HepG2 (cell line): ENCODE measurements at regions of chr9 and their contacts with region 1.

Region 1: GRCh38 chr9:131046581-131047202 is 37.7 kb downstream of the LAMC3 start:
- DNase-seq: peak; percentile 53
- ATAC-seq: peak; percentile 90
- H3K4me3 ChIP-seq: peak overlapping the region in 1 of 3 experiments; percentile 40; a peak in 2 of 6 replicates
- H3K27ac ChIP-seq: no peak overlapping the region
- H3K4me1 ChIP-seq: no peaks in the 10 kb centered on the region
- H3K27me3 ChIP-seq: peaks cover 3 to 47% of the 10 kb centered on the region in 2 experiments; a peak in 3 of 5 replicates
- CTCF ChIP-seq: peak; percentile 96
- EP300 ChIP-seq: no peak
- POLR2A ChIP-seq: no peak
- RAD21 ChIP-seq: peak; percentile 92

Region 2: DNA sequence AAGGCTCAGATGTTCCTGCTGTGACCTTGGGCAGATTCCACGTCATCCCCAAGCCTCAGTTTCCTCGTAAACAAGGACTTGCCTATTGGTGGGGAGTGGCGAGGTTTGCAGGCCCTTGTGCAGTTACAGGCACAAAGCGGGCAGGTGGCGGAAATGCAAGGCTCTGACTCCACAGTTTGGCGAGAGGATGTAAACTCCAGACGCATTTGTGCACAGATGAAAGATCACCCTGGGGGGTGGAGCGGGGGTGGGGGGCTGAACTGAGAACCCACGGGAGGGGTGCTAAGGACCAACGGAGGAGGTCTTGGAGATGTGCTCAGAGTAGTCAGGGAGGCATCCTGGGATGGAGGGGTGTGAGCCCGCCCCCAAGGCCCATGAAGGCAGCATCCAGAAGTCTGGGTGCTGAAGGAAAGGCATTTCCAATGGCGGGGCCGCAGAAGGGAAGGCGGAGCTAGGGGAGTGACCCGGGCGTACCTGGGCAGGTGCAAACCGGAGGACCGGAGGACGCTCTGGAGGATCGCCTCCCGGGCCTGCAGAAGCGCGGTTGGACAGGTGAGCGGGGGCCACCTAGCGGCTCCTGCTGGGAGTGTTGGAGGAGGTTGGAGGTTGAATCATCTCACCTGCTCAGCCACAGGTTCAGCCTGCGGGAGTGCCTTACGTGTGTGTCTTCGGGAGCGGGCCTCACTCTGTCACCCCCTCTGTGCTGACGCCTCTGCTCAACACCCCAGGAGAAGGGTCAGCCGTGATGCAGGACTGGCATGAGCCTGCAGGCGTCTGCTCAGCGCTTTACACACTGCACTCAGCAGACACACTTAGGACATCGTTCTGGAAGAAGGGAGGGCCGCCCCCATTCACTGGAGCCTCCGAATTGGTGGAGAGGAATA is 105.8 kb before region 1 on chr9:
- CTCF ChIA-PET with region 1: no interaction called
- POLR2A ChIA-PET with region 1: no interaction called
- in situ Hi-C with region 1: no loop called
- intact Hi-C with region 1: no loop called
- DNase-seq: peak; percentile 47
- ATAC-seq: peak; percentile 75
- H3K4me3 ChIP-seq: no peak overlapping the region
- H3K27ac ChIP-seq: no peak overlapping the region
- H3K4me1 ChIP-seq: peaks cover 24% of the 10 kb centered on the region
- H3K27me3 ChIP-seq: peaks cover 11 to 87% of the 10 kb centered on the region in 2 experiments
- CTCF ChIP-seq: peak; percentile 94
- EP300 ChIP-seq: no peak
- POLR2A ChIP-seq: no peak
- RAD21 ChIP-seq: peak; percentile 87

Region 3: GRCh38 chr9:131008909-131009618 is 37.6 kb before region 1 on chr9 and contains the start of gene LAMC3:
- CTCF ChIA-PET with region 1: no interaction called
- POLR2A ChIA-PET with region 1: no interaction called
- in situ Hi-C with region 1: loop called (anchors 5 kb)
- intact Hi-C with region 1: loop called (anchors 5 kb)
- DNase-seq: no peak
- ATAC-seq: peak; percentile 29
- H3K4me3 ChIP-seq: peak within 1 kb of the TSS in 1 of 3 experiments; percentile 23; a peak in 1 of 6 replicates
- H3K27ac ChIP-seq: no peak within 1 kb of the TSS
- H3K4me1 ChIP-seq: peaks cover 22% of the 10 kb centered on the region
- H3K27me3 ChIP-seq: peaks cover 13 to 62% of the 10 kb centered on the region in 2 experiments
- CTCF ChIP-seq: peak; percentile 41
- EP300 ChIP-seq: no peak
- POLR2A ChIP-seq: no peak
- RAD21 ChIP-seq: no peak
- total RNA-seq, gene LAMC3: 0.07 TPM in 1 of 2 replicates, not detected in the other

Region 4: DNA sequence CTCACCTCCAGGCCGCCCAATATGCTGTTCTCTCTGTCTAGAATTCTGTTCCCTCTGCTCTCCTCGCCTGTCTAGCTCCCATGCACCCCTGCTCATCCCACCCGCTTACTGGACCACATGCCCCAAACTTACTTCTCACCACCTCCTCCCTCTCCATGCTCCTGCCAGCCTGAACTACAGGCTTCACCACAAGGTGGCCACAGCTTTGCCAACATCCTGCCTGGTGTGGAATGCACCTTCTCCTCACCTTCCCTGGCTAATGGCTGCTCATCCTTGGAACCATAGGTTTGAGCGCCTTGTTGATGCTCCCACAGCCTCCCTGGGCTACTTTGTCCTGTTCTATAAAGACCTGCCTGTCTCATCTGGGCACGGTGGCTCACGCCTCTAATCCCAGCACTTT is 28.1 kb before region 1 on chr9:
- CTCF ChIA-PET with region 1: interaction called, 8 read pairs
- POLR2A ChIA-PET with region 1: no interaction called
- in situ Hi-C with region 1: loop called (anchors 5 kb)
- intact Hi-C with region 1: loop called (anchors 2 kb)
- DNase-seq: peak; percentile 20
- ATAC-seq: peak; percentile 85
- H3K4me3 ChIP-seq: no peak overlapping the region
- H3K27ac ChIP-seq: no peak overlapping the region
- H3K4me1 ChIP-seq: no peaks in the 10 kb centered on the region
- H3K27me3 ChIP-seq: peaks cover 7 to 69% of the 10 kb centered on the region in 2 experiments
- CTCF ChIP-seq: peak; percentile 62
- EP300 ChIP-seq: no peak
- POLR2A ChIP-seq: no peak
- RAD21 ChIP-seq: no peak

Region 5: DNA sequence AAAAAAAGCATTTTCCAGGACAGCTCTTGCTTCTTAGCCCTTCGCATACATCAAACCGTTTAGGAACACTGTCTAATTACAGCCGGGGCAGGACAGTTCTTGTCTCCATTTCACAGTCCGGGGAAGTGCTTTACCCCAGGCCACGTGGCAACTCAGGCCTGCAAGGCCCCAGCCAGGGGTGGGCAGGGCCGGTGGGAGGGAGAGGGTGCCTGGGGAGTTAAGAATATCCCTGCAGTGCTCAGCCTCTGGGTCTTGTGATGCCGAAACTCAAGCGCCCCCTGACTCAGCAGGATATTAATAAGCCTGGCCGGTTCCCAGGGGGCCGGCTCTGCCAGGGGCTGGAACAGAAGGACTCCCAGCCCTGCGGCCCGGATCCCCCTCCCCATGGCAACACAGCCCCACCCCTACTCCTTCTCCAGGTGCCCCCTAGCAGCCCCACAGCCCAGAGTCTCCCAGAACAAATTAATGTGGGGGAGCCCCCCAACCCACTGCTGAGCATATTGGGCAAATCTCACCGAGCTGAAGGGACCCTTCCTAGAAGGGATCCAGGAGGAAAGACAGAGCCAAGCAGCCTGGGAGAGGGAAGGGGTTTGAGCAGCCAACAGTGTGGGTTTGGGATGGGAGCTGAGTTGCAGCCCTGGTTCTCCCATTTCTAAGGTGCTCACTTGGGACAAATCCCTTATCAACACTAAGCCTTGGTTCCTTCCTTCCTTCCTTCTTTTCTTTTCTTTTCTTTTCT is 288.1 kb after region 1 on chr9:
- CTCF ChIA-PET with region 1: no interaction called
- POLR2A ChIA-PET with region 1: no interaction called
- in situ Hi-C with region 1: loop called (anchors 10 kb)
- intact Hi-C with region 1: no loop called
- DNase-seq: no peak
- ATAC-seq: no peak
- H3K4me3 ChIP-seq: no peak overlapping the region
- H3K27ac ChIP-seq: no peak overlapping the region
- H3K4me1 ChIP-seq: peaks cover 8% of the 10 kb centered on the region; the same call in 1 of the 2 replicates
- H3K27me3 ChIP-seq: peaks cover 2 to 4% of the 10 kb centered on the region in 2 experiments; a peak in 3 of 5 replicates
- CTCF ChIP-seq: no peak
- EP300 ChIP-seq: no peak
- POLR2A ChIP-seq: no peak
- RAD21 ChIP-seq: no peak